CD8-positive, alpha-beta memory T cell (primary cell): ENCODE measurements at regions of chr9 and their contacts with region 1.

Region 1: GRCh38 chr9:5326893-5327548 is 12.7 kb downstream of the RLN1 start:
- DNase-seq: peak; percentile 33 to 88 (median 49)
- H3K4me3 ChIP-seq: peak overlapping the region; percentile 6
- H3K4me3 Mint-ChIP-seq: peak overlapping the region; percentile 63 to 89 (median 71)
- H3K27ac ChIP-seq: peak overlapping the region; percentile 18
- H3K27ac Mint-ChIP-seq: peak overlapping the region; percentile 83 to 99 (median 90)
- H3K4me1 ChIP-seq: peaks cover 14% of the 10 kb centered on the region
- H3K4me1 Mint-ChIP-seq: peaks cover 46 to 56% (median 51%) of the 10 kb centered on the region in 3 donors
- H3K27me3 ChIP-seq: no peaks in the 10 kb centered on the region
- H3K27me3 Mint-ChIP-seq: peaks cover 0 to 2% of the 10 kb centered on the region in 2 donors

Region 2: GRCh38 chr9:4640027-4640426 is 687.0 kb before region 1 on chr9:
- CTCF ChIA-PET with region 1: no interaction called
- POLR2A ChIA-PET with region 1: no interaction called
- DNase-seq: peak; percentile 19 to 61 (median 49)
- H3K4me3 ChIP-seq: no peak overlapping the region
- H3K4me3 Mint-ChIP-seq: no peak overlapping the region
- H3K27ac ChIP-seq: no peak overlapping the region
- H3K27ac Mint-ChIP-seq: peak overlapping the region in 1 of 8 donors; percentile 43
- H3K4me1 ChIP-seq: no peaks in the 10 kb centered on the region
- H3K4me1 Mint-ChIP-seq: peaks cover 5 to 16% (median 8%) of the 10 kb centered on the region in 3 donors
- H3K27me3 ChIP-seq: no peaks in the 10 kb centered on the region
- H3K27me3 Mint-ChIP-seq: peaks cover 1 to 3% of the 10 kb centered on the region in 2 donors

Region 3: GRCh38 chr9:5352637-5353455 is 25.8 kb after region 1 on chr9:
- CTCF ChIA-PET with region 1: interaction called, 15 read pairs
- POLR2A ChIA-PET with region 1: no interaction called
- DNase-seq: peak in 2 of 5 donors; percentile 21 to 36
- H3K4me3 ChIP-seq: peak overlapping the region; percentile 1
- H3K4me3 Mint-ChIP-seq: peak overlapping the region in 6 of 7 donors; percentile 56 to 80 (median 73)
- H3K27ac ChIP-seq: no peak overlapping the region
- H3K27ac Mint-ChIP-seq: peak overlapping the region; percentile 39 to 91 (median 72)
- H3K4me1 ChIP-seq: peaks cover 39% of the 10 kb centered on the region
- H3K4me1 Mint-ChIP-seq: peaks cover 49 to 58% (median 52%) of the 10 kb centered on the region in 3 donors
- H3K27me3 ChIP-seq: no peaks in the 10 kb centered on the region
- H3K27me3 Mint-ChIP-seq: no peaks in the 10 kb centered on the region